Activated naive CD4-positive, alpha-beta T cell treated with anti-CD3 and anti-CD28 coated beads for 36 hours (primary cell): ENCODE measurements at regions of chr15 and their contacts with region 1.

Region 1: GRCh38 chr15:39426552-39427532 is 154.0 kb upstream of the THBS1 start:
- DNase-seq: peak; percentile 95
- H3K4me3 Mint-ChIP-seq: peak overlapping the region; percentile 17
- H3K27ac Mint-ChIP-seq: no peak overlapping the region
- H3K4me1 Mint-ChIP-seq: peaks cover 38% of the 10 kb centered on the region
- H3K27me3 Mint-ChIP-seq: peaks cover 26% of the 10 kb centered on the region

Region 2: DNA sequence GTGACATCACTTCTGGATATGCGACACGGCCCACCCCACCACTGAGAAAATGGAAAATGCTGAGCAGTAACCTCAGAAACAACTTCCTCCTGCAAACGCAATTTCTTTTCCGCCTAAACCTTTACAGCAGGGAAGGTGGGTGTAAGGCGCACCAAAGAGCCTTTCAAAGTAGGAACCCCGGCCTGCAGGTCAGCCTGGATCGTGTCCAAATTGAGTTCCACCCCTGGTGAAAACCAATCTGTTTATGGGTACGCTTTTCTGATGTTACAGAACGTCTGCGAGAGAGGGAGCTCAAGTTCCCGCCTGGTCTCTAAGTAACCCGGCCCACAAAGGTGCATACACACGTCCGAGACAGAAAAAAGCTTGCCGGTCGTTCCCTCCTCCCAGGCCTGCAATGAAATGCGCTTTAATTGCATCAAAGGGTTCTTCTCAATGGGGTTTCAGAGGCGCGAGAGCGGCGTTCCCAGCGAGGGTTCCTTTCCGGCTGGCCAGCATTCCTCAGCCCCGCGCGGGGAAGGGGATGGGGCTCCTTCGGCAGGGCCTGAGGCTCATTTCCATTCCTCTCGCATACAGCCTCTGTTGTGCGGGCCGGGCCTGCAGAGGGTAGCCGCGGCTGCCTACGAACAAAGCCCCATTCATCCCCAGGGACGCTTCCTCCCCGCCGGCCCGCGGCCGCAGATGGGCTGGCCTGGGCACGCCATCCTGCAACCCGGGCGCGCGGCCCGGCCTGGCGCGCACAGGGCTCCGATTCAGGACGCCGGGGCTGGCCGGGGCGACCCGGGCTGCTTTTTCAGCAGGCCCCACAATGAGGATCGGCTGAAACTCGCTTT is 1354.3 kb before region 1 on chr15:
- CTCF ChIA-PET with region 1: no interaction called
- intact Hi-C with region 1: loop called (anchors 2 kb)
- DNase-seq: peak; percentile 47
- H3K4me3 Mint-ChIP-seq: peak overlapping the region; percentile 44
- H3K27ac Mint-ChIP-seq: no peak overlapping the region
- H3K4me1 Mint-ChIP-seq: peaks cover 34% of the 10 kb centered on the region
- H3K27me3 Mint-ChIP-seq: peaks cover 65% of the 10 kb centered on the region

Region 3: DNA sequence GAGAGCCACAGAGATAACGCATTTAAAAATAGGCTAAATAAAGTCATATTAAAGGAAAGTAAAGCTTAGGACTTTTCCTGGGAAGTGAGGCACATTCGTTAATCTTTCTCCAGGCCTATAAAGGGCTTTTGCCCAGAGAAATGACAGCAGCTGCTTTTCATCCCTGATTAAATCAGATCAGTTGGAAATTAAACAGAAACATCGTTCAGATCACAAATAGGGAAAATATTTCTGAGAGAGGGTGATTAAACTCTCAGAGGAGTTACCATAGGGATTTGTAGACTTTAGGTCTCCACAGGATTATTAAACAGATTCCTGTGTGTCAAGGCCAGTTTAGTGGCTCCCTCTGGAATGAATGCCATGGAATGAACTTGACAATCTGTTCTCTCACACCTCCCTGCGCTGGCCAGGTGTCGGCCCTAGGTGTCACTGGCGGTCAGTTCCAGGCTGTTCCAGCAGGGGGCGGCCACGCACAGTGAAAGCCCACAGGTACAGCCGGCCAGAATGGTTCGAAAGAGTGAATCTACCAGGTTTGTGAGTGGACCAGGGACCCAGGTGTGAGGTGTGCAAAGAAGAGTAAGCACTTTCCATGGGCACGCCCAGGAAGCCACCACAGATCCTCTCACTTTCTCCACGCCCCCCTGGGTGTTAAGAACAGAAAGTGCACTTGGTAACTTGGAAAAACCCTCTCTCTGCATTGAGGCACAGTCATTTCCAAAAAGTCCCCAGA is 609.2 kb before region 1 on chr15:
- CTCF ChIA-PET with region 1: interaction called, 3 read pairs
- intact Hi-C with region 1: loop called (anchors 5 kb)
- DNase-seq: peak; percentile 90
- H3K4me3 Mint-ChIP-seq: no peak overlapping the region
- H3K27ac Mint-ChIP-seq: no peak overlapping the region
- H3K4me1 Mint-ChIP-seq: peaks cover 8% of the 10 kb centered on the region
- H3K27me3 Mint-ChIP-seq: peaks cover 2% of the 10 kb centered on the region

Region 4: GRCh38 chr15:39145854-39146625 is 280.8 kb before region 1 on chr15:
- CTCF ChIA-PET with region 1: no interaction called
- intact Hi-C with region 1: loop called (anchors 2 kb)
- DNase-seq: no peak
- H3K4me3 Mint-ChIP-seq: no peak overlapping the region
- H3K27ac Mint-ChIP-seq: no peak overlapping the region
- H3K4me1 Mint-ChIP-seq: peaks cover 24% of the 10 kb centered on the region
- H3K27me3 Mint-ChIP-seq: peaks cover 4% of the 10 kb centered on the region

Region 5: GRCh38 chr15:39260391-39260790 is 166.5 kb before region 1 on chr15:
- CTCF ChIA-PET with region 1: no interaction called
- intact Hi-C with region 1: loop called (anchors 5 kb)
- DNase-seq: no peak
- H3K4me3 Mint-ChIP-seq: no peak overlapping the region
- H3K27ac Mint-ChIP-seq: no peak overlapping the region
- H3K4me1 Mint-ChIP-seq: peaks cover 10% of the 10 kb centered on the region
- H3K27me3 Mint-ChIP-seq: peaks cover 19% of the 10 kb centered on the region

Region 6: DNA sequence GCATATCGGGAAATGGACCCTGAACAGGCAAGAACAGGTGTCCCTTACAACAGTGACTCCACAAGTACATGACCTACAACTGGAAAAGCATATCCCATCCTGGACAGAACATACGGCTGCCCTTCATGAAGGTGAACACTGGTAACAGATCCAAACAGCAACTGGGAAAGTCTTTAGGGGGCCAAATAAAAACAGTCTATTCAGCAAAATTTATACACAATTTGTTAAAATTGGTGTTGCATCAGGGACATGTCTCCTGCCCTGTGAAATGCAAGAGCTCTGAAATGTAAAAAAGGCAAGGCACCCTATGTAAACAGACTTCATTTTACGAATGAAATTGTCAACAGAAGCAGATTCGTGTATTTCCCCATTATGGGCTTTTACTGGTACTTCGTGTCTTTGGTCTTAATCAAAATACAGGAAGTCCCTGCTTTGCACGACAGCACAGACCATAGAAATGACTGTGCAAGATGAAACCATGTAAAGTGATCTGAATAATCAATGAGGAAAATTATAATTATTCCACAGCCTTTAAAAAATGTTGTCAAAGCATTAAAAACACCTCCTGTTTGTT is 26.7 kb after region 1 on chr15:
- CTCF ChIA-PET with region 1: no interaction called
- intact Hi-C with region 1: loop called (anchors 1 kb)
- DNase-seq: peak; percentile 30
- H3K4me3 Mint-ChIP-seq: no peak overlapping the region
- H3K27ac Mint-ChIP-seq: no peak overlapping the region
- H3K4me1 Mint-ChIP-seq: peaks cover 2% of the 10 kb centered on the region
- H3K27me3 Mint-ChIP-seq: peaks cover 3% of the 10 kb centered on the region

Region 7: GRCh38 chr15:39642011-39642640 is 215.3 kb after region 1 on chr15:
- CTCF ChIA-PET with region 1: no interaction called
- intact Hi-C with region 1: loop called (anchors 2 kb)
- DNase-seq: no peak
- H3K4me3 Mint-ChIP-seq: no peak overlapping the region
- H3K27ac Mint-ChIP-seq: no peak overlapping the region
- H3K4me1 Mint-ChIP-seq: peaks cover 20% of the 10 kb centered on the region
- H3K27me3 Mint-ChIP-seq: peaks cover 1% of the 10 kb centered on the region